ENCODE measurements at regions of chr17 and their contacts with region 1.

Region 1: DNA sequence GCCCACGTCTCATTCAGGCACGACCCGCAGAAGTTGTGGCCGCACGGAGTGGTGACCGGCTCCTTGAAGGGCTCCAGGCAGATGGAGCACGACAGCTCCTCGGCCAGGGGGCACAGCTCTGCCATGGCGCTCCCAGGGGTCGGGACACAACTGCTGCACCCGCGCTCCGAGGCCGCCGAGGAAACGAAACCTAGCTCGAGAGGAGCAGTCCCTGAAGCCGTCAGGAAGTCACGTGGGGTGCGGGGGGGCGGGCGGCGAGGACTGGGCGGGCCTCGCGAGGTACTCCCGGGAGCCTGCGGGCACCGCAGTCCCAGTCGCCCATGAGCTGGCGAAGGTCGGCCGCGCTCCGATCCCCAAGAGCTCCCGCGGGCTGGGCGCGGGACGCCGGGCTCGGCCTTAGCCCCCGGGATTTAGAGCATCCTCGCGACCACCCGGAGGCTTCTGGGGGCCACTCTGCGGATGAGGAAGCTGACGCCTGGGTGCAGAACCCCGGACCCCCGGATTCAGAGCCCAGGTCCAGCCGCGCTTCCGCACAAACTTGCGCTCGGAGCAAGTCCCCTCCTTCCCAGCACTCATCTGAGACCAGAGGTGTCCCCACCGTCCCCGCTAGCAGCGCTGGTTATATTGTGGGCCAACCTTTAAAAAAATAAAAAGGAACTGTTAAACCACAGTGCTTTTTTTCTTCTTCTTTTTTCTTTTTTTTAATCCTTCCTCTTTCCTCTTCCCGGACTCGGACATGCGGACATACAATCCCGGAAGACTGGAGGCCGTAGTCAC is at the start of gene TRIM25:
- H3K4me3 ChIP-seq: peak within 1 kb of the TSS; percentile 92
- H3K27ac ChIP-seq: peak within 1 kb of the TSS; percentile 75
- H3K4me1 ChIP-seq: peaks cover 4% of the 10 kb centered on the region
- CTCF ChIP-seq: no peak

Region 2: GRCh38 chr17:56897646-56898424 is 16.2 kb before region 1 on chr17:
- CTCF ChIA-PET with region 1: interaction called, 3 read pairs
- POLR2A ChIA-PET with region 1: interaction called, 10 read pairs
- H3K4me3 ChIP-seq: no peak overlapping the region
- H3K27ac ChIP-seq: no peak overlapping the region
- H3K4me1 ChIP-seq: no peaks in the 10 kb centered on the region
- CTCF ChIP-seq: no peak

Region 3: DNA sequence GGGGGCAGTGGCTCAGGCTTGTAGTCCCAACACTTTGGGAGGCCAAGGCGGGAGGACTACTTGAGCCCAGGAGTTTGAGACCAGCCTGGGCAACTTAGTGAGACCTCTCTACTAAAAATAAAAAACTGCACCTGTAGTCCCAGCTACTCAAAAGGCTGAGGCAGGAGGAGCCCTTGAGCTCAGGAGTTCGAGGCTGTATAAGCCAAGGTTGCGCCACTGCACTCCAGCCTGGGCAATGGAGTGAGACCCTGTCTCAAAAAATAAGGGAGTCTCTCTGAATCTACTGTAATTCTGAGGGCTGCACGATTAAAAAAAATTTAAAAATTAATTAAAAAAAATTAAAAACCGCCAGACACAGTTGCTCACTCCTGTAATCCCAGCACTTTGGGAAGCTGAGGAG is 42.9 kb after region 1 on chr17:
- CTCF ChIA-PET with region 1: no interaction called
- POLR2A ChIA-PET with region 1: no interaction called
- H3K4me3 ChIP-seq: no peak overlapping the region
- H3K27ac ChIP-seq: no peak overlapping the region
- H3K4me1 ChIP-seq: no peaks in the 10 kb centered on the region
- CTCF ChIP-seq: no peak

Region 4: DNA sequence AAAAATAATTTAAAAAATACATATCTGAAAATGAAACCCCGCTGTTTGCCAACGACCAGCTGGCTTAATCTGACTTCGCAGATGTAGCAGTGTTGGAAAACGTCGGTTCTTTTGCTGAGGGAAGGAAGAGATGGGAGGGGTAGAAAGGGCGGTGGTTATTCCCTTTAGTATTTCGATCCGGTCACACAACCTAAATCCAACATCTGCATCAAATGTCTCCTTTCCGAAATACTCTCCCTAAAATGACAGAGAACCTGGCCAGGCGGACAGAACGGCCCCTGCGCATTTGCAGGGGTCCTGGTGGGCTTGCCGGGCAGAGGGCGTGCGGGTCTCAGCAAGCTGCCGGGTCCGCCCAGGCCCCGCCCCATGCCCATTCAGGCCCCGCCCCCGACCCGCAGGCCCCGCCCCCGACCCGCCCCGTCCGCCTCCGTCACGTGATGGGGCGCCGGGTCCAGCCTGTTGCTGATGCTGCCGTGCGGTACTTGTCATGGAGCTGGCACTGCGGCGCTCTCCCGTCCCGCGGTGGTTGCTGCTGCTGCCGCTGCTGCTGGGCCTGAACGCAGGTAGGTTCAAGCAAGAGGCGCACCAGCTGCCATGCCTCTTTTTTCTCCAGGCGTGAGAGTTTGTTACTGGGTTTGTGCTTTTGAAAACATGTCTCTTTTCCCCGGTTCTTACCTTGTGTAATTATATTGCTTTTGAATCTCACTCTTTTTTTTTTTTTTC is 63.8 kb after region 1 on chr17 and contains the start of gene SCPEP1:
- CTCF ChIA-PET with region 1: no interaction called
- POLR2A ChIA-PET with region 1: interaction called, 13 read pairs
- H3K4me3 ChIP-seq: peak within 1 kb of the TSS; percentile 59
- H3K27ac ChIP-seq: no peak within 1 kb of the TSS
- H3K4me1 ChIP-seq: no peaks in the 10 kb centered on the region
- CTCF ChIP-seq: no peak